Adrenal gland (tissue), 19 donors: ENCODE measurements at regions of chr2 and their contacts with region 1.

Region 1: DNA sequence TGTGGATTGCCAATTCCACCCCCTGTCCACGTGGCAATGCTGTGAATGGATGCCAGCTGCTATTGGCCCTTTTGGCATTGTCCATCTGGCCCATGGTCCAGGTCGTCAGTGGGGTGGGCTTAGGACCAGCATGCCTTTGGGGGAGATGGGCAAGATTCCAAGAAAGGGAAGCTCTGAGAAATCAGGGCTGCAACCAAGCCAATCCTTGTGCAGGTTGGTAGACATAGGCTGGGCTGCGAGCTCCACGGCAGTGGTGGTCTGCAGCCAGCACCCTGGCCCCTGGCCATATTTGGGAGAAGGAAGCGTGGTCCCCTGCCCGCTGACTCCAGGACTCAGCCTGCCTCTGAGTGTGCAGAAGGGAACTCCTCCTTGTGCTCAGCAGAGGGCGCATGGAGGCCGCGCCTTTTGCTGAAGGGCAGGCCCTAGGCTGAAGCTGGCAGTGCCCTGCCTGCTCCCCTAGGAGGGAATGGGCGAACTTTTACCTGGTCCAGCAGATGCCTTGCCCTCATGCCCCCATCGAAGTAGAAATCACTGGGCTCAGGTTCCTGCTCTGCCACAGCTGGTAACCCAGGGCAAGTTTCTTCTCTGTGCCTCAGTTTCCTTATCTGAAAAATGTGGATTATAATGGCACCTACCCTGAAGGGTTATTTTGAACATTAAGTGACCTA is 5.4 kb downstream of the SPR start:
- DNase-seq: peak; percentile 73 to 84 (median 80)
- H3K4me3 ChIP-seq: no peak overlapping the region
- H3K27ac ChIP-seq: no peak overlapping the region
- H3K4me1 ChIP-seq: peaks cover 11 to 14% of the 10 kb centered on the region in 2 donors
- H3K27me3 ChIP-seq: peaks cover 8% of the 10 kb centered on the region
- CTCF ChIP-seq: peak; percentile 53 to 86 (median 76)
- POLR2A ChIP-seq: no peak

Region 2: GRCh38 chr2:72973566-72974435 is 81.2 kb after region 1 on chr2:
- intact Hi-C with region 1: loop called in 1 of 2 experiments (anchors 10 kb)
- DNase-seq: peak in 6 of 7 donors; percentile 33 to 67 (median 49)
- H3K4me3 ChIP-seq: no peak overlapping the region
- H3K27ac ChIP-seq: no peak overlapping the region
- H3K4me1 ChIP-seq: no peaks in the 10 kb centered on the region
- H3K27me3 ChIP-seq: no peaks in the 10 kb centered on the region
- CTCF ChIP-seq: peak; percentile 41 to 65 (median 50)
- POLR2A ChIP-seq: no peak

Region 3: DNA sequence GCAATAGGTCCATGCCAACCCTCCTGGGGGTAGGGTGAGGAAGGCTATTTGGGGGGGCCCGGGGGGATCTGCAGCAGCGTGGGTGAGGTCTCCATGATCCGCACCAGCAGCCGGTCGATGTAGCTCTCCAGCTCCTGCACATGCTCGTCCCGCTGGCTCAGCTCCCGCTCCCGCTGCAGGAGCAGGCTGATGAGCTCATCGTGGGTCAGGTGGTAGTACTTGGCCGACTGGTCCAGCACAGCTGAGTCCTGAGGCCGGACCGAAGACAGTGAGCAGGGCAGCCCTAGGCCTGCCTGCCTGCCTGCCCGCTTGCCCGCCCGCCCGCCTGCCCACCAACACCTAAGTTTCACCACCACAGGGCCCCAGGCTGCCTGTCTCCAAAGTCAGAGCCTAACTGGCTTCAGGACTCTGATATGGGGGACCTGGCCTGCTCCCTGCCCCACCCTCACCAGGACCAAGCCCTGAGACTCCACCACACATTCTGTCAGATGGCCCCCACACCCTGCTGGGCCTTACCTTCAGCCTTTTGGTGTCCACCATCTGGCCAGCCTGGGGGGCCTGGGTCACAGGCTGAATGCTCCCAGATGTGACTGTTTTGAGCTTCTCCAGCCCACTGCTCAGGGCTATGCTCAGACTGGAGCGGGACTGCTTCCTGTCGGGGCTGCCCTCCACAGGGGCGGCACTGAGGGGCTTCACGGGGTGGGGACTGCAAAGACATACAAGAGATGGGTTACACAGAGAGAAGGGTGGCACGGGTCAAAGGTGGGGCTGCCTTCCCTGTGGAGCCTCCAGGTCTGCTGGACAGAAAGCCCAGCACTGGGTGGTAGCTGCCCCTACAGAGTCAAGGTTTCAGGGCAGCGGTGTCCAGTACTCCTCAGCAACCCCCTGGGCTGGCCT is 183.1 kb after region 1 on chr2:
- intact Hi-C with region 1: loop called in 1 of 2 experiments (anchors 5 kb)
- DNase-seq: peak in 6 of 7 donors; percentile 44 to 78 (median 67)
- H3K4me3 ChIP-seq: no peak overlapping the region
- H3K27ac ChIP-seq: no peak overlapping the region
- H3K4me1 ChIP-seq: peaks cover 8% of the 10 kb centered on the region in 2 donors
- H3K27me3 ChIP-seq: no peaks in the 10 kb centered on the region
- CTCF ChIP-seq: no peak
- POLR2A ChIP-seq: no peak

Region 4: GRCh38 chr2:73156539-73157124 is 264.0 kb after region 1 on chr2:
- intact Hi-C with region 1: loop called (anchors 5 to 10 kb)
- DNase-seq: peak; percentile 61 to 79 (median 76)
- H3K4me3 ChIP-seq: no peak overlapping the region
- H3K27ac ChIP-seq: no peak overlapping the region
- H3K4me1 ChIP-seq: peaks cover 0 to 7% of the 10 kb centered on the region in 2 donors
- H3K27me3 ChIP-seq: peaks cover 5% of the 10 kb centered on the region
- CTCF ChIP-seq: peak; percentile 57 to 81 (median 74)
- POLR2A ChIP-seq: no peak